ENCODE measurements at regions of chr12 and their contacts with region 1.

Region 1: DNA sequence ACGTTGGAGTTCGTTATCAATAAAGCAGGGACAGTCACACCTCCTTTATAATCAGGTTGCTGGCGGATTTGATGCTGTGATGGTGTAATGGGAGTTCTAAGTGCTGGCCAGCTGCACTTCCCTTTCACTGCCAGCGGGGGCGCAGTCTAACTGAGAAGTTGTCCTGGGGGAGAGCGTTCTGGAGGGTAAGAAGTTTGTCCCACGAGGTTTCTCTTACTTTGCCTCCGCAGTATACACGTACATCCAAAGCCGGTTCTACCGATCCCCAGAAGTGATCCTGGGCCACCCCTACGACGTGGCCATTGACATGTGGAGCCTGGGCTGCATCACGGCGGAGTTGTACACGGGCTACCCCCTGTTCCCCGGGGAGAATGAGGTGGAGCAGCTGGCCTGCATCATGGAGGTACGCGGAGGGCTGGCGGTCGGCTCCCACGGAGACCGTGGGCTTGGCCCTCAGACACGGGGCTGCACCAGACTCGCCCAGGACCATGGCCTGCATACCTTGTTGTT is 42.7 kb downstream of the DYRK4 start:
- DNase-seq: peak; percentile 68
- ATAC-seq: peak; percentile 97
- H3K4me3 ChIP-seq: peak overlapping the region; percentile 78
- H3K27ac ChIP-seq: peak overlapping the region; percentile 65
- H3K4me1 ChIP-seq: no peaks in the 10 kb centered on the region
- H3K27me3 ChIP-seq: no peaks in the 10 kb centered on the region
- CTCF ChIP-seq: peak; percentile 97 to 100 (median 99)
- EP300 ChIP-seq: no peak
- POLR2A ChIP-seq: peak; percentile 83
- RAD21 ChIP-seq: peak; percentile 73

Region 2: DNA sequence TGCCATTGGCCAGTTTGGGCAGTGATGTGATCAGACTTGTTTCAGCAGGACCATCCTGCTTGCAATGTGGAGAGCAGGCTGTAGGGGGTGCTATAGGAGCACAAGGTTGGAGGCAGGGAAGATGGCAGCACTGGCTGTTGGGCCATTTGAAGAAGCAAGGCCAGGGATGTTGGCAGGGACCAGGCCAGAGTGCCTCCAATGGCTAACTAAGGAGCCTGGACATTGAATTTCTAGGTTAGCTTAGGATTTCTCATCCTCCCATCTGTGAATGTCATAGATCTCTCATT is 248.8 kb before region 1 on chr12:
- CTCF ChIA-PET with region 1: no interaction called
- POLR2A ChIA-PET with region 1: no interaction called
- RAD21 ChIA-PET with region 1: no interaction called
- SMC1A ChIA-PET with region 1: no interaction called
- in situ Hi-C with region 1: no loop called
- intact Hi-C with region 1: no loop called
- DNase-seq: no peak
- ATAC-seq: peak; percentile 86
- H3K4me3 ChIP-seq: no peak overlapping the region
- H3K27ac ChIP-seq: no peak overlapping the region
- H3K4me1 ChIP-seq: no peaks in the 10 kb centered on the region
- H3K27me3 ChIP-seq: no peaks in the 10 kb centered on the region
- CTCF ChIP-seq: peak; percentile 43 to 70 (median 64)
- EP300 ChIP-seq: no peak
- POLR2A ChIP-seq: no peak
- RAD21 ChIP-seq: peak; percentile 57

Region 3: GRCh38 chr12:4591180-4591687 is 13.5 kb before region 1 on chr12:
- CTCF ChIA-PET with region 1: interaction called, 30 read pairs
- POLR2A ChIA-PET with region 1: no interaction called
- RAD21 ChIA-PET with region 1: no interaction called
- SMC1A ChIA-PET with region 1: interaction called, 4 read pairs
- in situ Hi-C with region 1: no loop called
- intact Hi-C with region 1: no loop called
- DNase-seq: no peak
- ATAC-seq: no peak
- H3K4me3 ChIP-seq: no peak overlapping the region
- H3K27ac ChIP-seq: no peak overlapping the region
- H3K4me1 ChIP-seq: no peaks in the 10 kb centered on the region
- H3K27me3 ChIP-seq: no peaks in the 10 kb centered on the region
- CTCF ChIP-seq: no peak
- EP300 ChIP-seq: no peak
- POLR2A ChIP-seq: no peak
- RAD21 ChIP-seq: no peak

Region 4: DNA sequence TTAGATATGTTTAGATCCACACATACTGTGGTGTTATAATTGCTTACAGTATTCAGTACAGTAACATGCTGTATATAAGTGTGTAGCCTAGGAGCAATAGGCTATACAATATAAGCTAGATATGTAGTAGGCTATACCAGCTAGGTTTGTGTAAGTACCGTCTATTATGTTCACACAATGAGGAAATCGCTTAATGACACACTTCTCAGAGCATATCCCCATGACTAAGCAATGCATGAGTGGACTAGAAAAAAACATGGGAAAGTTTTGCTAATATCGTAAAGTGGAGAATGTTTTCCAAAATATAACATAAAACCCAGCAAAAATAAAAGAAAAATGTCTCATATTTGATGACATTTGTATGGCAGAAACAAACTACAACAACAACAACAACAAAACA is 16.8 kb after region 1 on chr12:
- CTCF ChIA-PET with region 1: interaction called, 14 read pairs
- POLR2A ChIA-PET with region 1: no interaction called
- RAD21 ChIA-PET with region 1: interaction called, 3 read pairs
- SMC1A ChIA-PET with region 1: interaction called, 3 read pairs
- in situ Hi-C with region 1: no loop called
- intact Hi-C with region 1: no loop called
- DNase-seq: no peak
- ATAC-seq: no peak
- H3K4me3 ChIP-seq: no peak overlapping the region
- H3K27ac ChIP-seq: no peak overlapping the region
- H3K4me1 ChIP-seq: no peaks in the 10 kb centered on the region
- H3K27me3 ChIP-seq: no peaks in the 10 kb centered on the region
- CTCF ChIP-seq: no peak
- EP300 ChIP-seq: no peak
- POLR2A ChIP-seq: no peak
- RAD21 ChIP-seq: no peak

Region 5: GRCh38 chr12:4648501-4649357 is 44.0 kb after region 1 on chr12 and contains the starts of genes AKAP3 and NDUFA9:
- CTCF ChIA-PET with region 1: interaction called, 14 read pairs
- POLR2A ChIA-PET with region 1: interaction called, 3 read pairs
- RAD21 ChIA-PET with region 1: interaction called, 14 read pairs
- SMC1A ChIA-PET with region 1: interaction called, 4 read pairs
- in situ Hi-C with region 1: no loop called
- intact Hi-C with region 1: loop called (anchors 2 kb)
- DNase-seq: peak; percentile 64
- ATAC-seq: peak; percentile 96
- H3K4me3 ChIP-seq: peak within 1 kb of the TSS; percentile 92
- H3K27ac ChIP-seq: peak within 1 kb of the TSS; percentile 93
- H3K4me1 ChIP-seq: peaks cover 16% of the 10 kb centered on the region; the same call in 1 of the 2 replicates
- H3K27me3 ChIP-seq: no peaks in the 10 kb centered on the region
- CTCF ChIP-seq: no peak
- EP300 ChIP-seq: no peak
- POLR2A ChIP-seq: peak; percentile 95
- RAD21 ChIP-seq: no peak
- polyA plus RNA-seq, gene AKAP3: 0.40 to 0.47 TPM
- polyA plus RNA-seq, gene NDUFA9: 360 to 472 TPM

Region 6: DNA sequence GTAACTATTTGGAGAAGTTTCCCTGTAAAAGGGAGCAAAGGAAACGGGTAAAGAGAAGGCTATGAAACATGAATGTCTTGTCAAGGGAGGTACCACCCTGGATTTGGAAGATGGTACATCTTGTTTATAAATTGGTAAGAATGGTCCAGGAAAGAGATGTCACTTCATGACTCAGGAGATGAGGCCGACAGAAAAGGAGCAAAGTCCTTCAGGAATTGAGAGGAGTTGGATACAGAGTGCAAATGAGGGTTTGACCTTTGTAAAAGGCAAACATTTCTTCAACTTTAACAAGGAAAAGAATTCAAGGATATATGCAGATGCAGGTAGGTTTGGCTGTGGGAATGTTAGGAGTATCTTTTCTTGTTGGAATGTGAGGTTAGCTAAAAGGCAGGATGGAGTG is 75.0 kb after region 1 on chr12:
- CTCF ChIA-PET with region 1: no interaction called
- POLR2A ChIA-PET with region 1: no interaction called
- RAD21 ChIA-PET with region 1: no interaction called
- SMC1A ChIA-PET with region 1: no interaction called
- in situ Hi-C with region 1: no loop called
- intact Hi-C with region 1: no loop called
- DNase-seq: no peak
- ATAC-seq: no peak
- H3K4me3 ChIP-seq: no peak overlapping the region
- H3K27ac ChIP-seq: no peak overlapping the region
- H3K4me1 ChIP-seq: no peaks in the 10 kb centered on the region
- H3K27me3 ChIP-seq: no peaks in the 10 kb centered on the region
- CTCF ChIP-seq: no peak
- EP300 ChIP-seq: no peak
- POLR2A ChIP-seq: no peak
- RAD21 ChIP-seq: no peak

Region 7: DNA sequence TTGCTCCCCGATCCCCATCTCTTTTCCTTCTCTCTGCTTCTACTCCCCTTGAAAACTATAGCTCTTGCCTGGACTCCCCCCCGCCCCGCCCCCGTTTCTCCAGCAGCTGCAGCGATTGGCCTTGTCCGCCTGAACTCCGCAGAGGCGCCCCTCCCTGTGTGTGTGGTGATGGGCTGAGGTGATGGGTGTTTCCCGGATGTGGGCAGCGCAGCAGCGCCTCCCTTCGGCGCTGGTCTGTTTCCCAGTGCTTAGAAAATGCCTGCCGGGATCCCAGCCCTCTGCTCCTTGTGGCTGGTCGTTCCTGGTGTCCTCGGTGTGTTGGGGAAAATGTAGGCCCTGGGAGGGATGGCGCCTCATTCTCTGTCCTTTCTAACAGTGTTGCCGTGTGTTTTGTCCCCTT is 158.8 kb after region 1 on chr12:
- CTCF ChIA-PET with region 1: interaction called, 6 read pairs
- POLR2A ChIA-PET with region 1: no interaction called
- RAD21 ChIA-PET with region 1: no interaction called
- SMC1A ChIA-PET with region 1: no interaction called
- in situ Hi-C with region 1: no loop called
- intact Hi-C with region 1: loop called (anchors 10 kb)
- DNase-seq: no peak
- ATAC-seq: no peak
- H3K4me3 ChIP-seq: no peak overlapping the region
- H3K27ac ChIP-seq: no peak overlapping the region
- H3K4me1 ChIP-seq: no peaks in the 10 kb centered on the region
- H3K27me3 ChIP-seq: no peaks in the 10 kb centered on the region
- CTCF ChIP-seq: no peak
- EP300 ChIP-seq: no peak
- POLR2A ChIP-seq: no peak
- RAD21 ChIP-seq: no peak

Measured in GM12878 (cell line).